ENCODE measurements at regions of chr7 and their contacts with region 1.

Region 1: GRCh38 chr7:141654551-141654950 is 47.4 kb downstream of the DENND11 start:
- DNase-seq: peak; percentile 55
- H3K4me3 ChIP-seq: no peak overlapping the region
- H3K27ac ChIP-seq: no peak overlapping the region
- H3K4me1 ChIP-seq: no peaks in the 10 kb centered on the region
- H3K27me3 ChIP-seq: no peaks in the 10 kb centered on the region
- CTCF ChIP-seq: peak; percentile 72 to 89

Region 2: DNA sequence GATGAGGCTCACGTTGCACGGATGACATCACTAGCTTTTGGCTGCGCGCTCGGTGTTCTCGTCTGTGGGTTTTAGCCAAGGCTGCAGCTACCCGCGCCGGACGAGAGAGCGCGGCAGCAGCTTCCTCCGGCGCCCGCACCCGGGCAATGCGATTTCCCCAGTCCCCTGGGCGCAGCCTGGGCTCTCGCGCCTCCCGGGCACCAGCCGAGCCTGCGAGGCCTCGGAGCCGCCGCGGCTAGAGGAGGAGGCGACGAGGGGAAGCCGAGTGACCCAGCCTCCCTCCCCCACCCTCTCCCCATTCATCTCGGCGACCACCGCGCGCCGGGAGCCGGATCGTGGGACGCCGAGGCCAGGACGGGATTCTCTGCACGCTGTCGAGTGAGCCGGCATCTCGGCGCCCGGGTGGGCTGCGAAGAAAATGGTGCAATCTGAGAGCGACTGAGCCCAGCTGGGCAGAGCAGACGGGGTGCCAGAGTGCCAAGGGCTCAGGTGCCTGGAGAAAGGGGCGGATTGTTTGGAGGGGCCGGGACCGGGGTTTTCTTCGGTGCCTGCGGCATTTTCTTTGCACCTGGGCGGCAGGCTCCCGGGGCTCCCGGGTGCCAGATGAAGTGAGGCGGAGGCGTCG is 581.9 kb before region 1 on chr7:
- CTCF ChIA-PET with region 1: no interaction called
- dilution Hi-C with region 1: no loop called
- in situ Hi-C with region 1: no loop called
- intact Hi-C with region 1: loop called (anchors 5 kb)
- DNase-seq: peak; percentile 53
- H3K4me3 ChIP-seq: peak overlapping the region; percentile 28 to 46 (median 43)
- H3K27ac ChIP-seq: no peak overlapping the region
- H3K4me1 ChIP-seq: peaks cover 24% of the 10 kb centered on the region
- H3K27me3 ChIP-seq: peaks cover 44% of the 10 kb centered on the region
- CTCF ChIP-seq: no peak

Region 3: GRCh38 chr7:141262101-141263090 is 392.2 kb before region 1 on chr7:
- CTCF ChIA-PET with region 1: no interaction called
- dilution Hi-C with region 1: no loop called
- in situ Hi-C with region 1: loop called in 1 of 2 experiments (anchors 25 kb)
- intact Hi-C with region 1: no loop called
- DNase-seq: no peak
- H3K4me3 ChIP-seq: no peak overlapping the region
- H3K27ac ChIP-seq: no peak overlapping the region
- H3K4me1 ChIP-seq: no peaks in the 10 kb centered on the region
- H3K27me3 ChIP-seq: no peaks in the 10 kb centered on the region
- CTCF ChIP-seq: peak in 1 of 2 donors; percentile 29

Region 4: GRCh38 chr7:141551094-141551781 is 103.3 kb before region 1 on chr7 and contains the start of gene AGK:
- CTCF ChIA-PET with region 1: no interaction called
- dilution Hi-C with region 1: no loop called
- in situ Hi-C with region 1: no loop called
- intact Hi-C with region 1: loop called (anchors 5 kb)
- DNase-seq: peak; percentile 66
- H3K4me3 ChIP-seq: peak within 1 kb of the TSS; percentile 65 to 97 (median 84)
- H3K27ac ChIP-seq: peak within 1 kb of the TSS; percentile 49
- H3K4me1 ChIP-seq: peaks cover 6% of the 10 kb centered on the region
- H3K27me3 ChIP-seq: no peaks in the 10 kb centered on the region
- CTCF ChIP-seq: no peak
- total RNA-seq, gene AGK: 26.2 to 34.7 TPM

Region 5: DNA sequence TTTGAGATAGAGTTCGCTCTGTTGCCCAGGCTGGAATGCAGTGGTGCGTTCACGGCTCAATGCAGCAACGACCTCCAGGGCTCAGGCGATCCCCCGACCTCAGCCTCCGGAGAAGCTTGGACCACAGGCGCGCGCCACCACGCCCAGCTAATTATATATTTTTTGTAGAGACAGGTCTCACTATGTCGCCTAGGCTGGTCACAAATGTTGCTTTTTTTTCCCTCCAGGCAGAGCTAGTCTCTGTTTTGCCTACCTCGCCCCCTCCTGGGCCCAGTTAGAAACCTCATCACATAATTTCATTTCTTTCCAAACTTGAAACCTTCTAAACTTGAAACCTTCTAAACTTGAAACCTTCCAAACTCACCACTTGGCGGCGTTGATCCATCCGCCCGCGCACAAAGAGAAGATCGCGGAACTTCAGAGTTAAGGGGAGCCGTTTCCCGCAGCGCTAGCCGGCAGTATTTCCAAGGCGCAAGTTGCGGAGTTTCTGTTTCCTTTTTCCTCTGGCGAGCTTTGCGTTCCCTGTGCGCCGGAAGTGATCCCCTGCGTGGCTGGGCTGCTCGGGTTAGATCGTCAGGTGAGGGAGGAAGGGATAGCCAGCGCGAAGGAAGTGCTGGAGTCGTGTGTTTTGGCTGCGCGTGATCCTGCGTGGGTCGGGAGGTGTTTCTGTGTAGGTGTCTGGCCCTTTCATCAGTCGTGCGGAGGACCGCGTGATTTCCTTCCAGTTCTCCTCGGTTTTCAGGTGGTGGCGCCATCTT is 83.5 kb after region 1 on chr7 and contains the start of gene SSBP1:
- CTCF ChIA-PET with region 1: interaction called, 4 read pairs
- dilution Hi-C with region 1: no loop called
- in situ Hi-C with region 1: no loop called
- intact Hi-C with region 1: loop called (anchors 1 kb)
- DNase-seq: peak; percentile 94
- H3K4me3 ChIP-seq: peak within 1 kb of the TSS; percentile 95 to 98 (median 97)
- H3K27ac ChIP-seq: peak within 1 kb of the TSS; percentile 87
- H3K4me1 ChIP-seq: peaks cover 11% of the 10 kb centered on the region
- H3K27me3 ChIP-seq: no peaks in the 10 kb centered on the region
- CTCF ChIP-seq: peak; percentile 75 to 86
- total RNA-seq, gene SSBP1: 81.0 to 163 TPM

Region 6: DNA sequence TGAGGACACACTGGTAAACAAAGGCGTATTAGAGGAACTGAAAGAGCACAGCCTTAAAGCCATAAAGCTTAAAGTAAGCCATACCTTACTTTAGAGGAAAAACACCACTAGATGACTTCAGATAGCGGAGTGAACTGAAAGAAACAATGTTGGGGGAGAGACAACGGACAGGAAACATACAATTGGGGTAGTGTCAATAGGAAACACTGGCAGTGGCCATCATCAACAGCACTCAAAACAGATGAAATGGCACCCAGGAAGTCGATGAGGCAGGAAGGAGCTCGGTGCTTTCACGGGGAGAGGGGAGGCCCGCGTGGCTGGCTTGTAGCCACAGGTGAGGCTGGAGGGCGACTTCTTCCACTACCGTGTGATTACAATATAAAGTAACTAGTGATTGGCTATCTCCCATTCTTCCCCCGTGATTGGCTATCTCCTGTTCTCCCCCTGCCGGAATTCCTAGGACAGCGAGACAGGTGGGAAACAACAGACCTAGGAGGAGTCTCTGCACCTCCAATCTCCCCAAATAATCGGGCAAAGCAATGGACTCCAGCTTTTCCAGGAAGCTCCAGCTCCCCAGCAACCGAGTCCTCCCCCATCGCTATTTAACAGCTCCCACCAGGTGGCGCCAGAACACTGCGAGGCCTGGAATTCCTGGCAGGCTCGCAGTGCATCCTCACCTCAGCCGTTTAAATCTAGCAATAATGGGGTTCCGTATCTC is 321.4 kb after region 1 on chr7:
- CTCF ChIA-PET with region 1: no interaction called
- dilution Hi-C with region 1: no loop called
- in situ Hi-C with region 1: no loop called
- intact Hi-C with region 1: loop called (anchors 5 kb)
- DNase-seq: peak; percentile 78
- H3K4me3 ChIP-seq: peak overlapping the region in 2 of 3 experiments; percentile 8 to 29
- H3K27ac ChIP-seq: peak overlapping the region; percentile 13
- H3K4me1 ChIP-seq: peaks cover 13% of the 10 kb centered on the region
- H3K27me3 ChIP-seq: no peaks in the 10 kb centered on the region
- CTCF ChIP-seq: peak; percentile 82 to 96